Caco-2 (cell line): ENCODE measurements at regions of chr14 and their contacts with region 1.

Region 1: GRCh38 chr14:44657696-44658388 is 150.8 kb upstream of the FSCB start:
- DNase-seq: peak in 1 of 2 experiments; percentile 24
- H3K4me3 ChIP-seq: no peak overlapping the region
- H3K4me3 Mint-ChIP-seq: no peak overlapping the region
- H3K27ac Mint-ChIP-seq: no peak overlapping the region
- H3K4me1 ChIP-seq: no peaks in the 10 kb centered on the region
- H3K4me1 Mint-ChIP-seq: no peaks in the 10 kb centered on the region
- H3K27me3 ChIP-seq: no peaks in the 10 kb centered on the region
- H3K27me3 Mint-ChIP-seq: no peaks in the 10 kb centered on the region
- CTCF ChIP-seq: peak in 1 of 2 experiments; percentile 60

Region 2: DNA sequence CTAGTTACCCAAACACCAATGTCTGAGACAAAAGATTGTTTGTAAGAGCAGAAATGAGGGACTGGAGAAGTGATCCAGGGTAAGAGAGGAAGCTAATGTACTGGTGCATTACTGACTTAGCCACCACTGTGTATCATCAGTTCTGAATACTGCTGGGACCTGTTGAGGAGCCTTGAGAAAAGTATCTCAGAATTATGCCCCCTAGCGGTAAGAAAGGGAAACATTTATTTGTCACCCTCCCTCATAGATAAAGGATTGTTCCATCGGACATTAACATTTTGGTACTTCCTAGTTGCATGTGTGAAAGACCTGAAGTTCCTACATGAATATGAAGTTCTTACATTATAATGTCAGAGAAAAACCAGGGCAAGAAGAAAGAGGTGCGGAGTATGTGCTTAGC is 763.3 kb before region 1 on chr14:
- CTCF ChIA-PET with region 1: no interaction called
- POLR2A ChIA-PET with region 1: no interaction called
- intact Hi-C with region 1: loop called (anchors 5 kb)
- DNase-seq: peak in 1 of 2 experiments; percentile 30
- H3K4me3 ChIP-seq: no peak overlapping the region
- H3K4me3 Mint-ChIP-seq: no peak overlapping the region
- H3K27ac Mint-ChIP-seq: no peak overlapping the region
- H3K4me1 ChIP-seq: no peaks in the 10 kb centered on the region
- H3K4me1 Mint-ChIP-seq: no peaks in the 10 kb centered on the region
- H3K27me3 ChIP-seq: no peaks in the 10 kb centered on the region
- H3K27me3 Mint-ChIP-seq: no peaks in the 10 kb centered on the region
- CTCF ChIP-seq: peak; percentile 33 to 49

Region 3: DNA sequence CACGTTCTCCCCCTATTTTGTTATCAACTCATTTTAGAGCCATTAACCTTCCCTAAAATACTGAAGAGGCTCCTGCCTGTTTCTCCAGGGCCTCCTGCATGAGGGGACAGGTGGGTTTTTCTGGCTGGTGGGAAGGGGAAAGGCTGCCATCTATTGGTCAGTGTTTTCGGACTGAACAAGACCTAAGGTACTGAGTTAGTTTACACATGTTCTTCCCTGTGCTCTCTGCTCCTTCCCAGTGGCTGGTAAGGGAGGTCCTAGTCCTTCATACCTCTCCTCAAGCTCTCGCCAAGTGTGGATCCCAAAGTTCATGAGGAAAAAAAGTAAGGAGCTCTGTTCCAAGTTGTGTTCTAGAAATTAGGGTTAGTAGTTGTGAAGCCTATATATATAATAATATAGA is 508.2 kb before region 1 on chr14:
- CTCF ChIA-PET with region 1: no interaction called
- POLR2A ChIA-PET with region 1: no interaction called
- intact Hi-C with region 1: loop called (anchors 1 kb)
- DNase-seq: peak; percentile 63 to 64
- H3K4me3 ChIP-seq: no peak overlapping the region
- H3K4me3 Mint-ChIP-seq: no peak overlapping the region
- H3K27ac Mint-ChIP-seq: no peak overlapping the region
- H3K4me1 ChIP-seq: no peaks in the 10 kb centered on the region
- H3K4me1 Mint-ChIP-seq: no peaks in the 10 kb centered on the region
- H3K27me3 ChIP-seq: no peaks in the 10 kb centered on the region
- H3K27me3 Mint-ChIP-seq: no peaks in the 10 kb centered on the region
- CTCF ChIP-seq: peak; percentile 52 to 64

Region 4: GRCh38 chr14:44369401-44370123 is 288.3 kb before region 1 on chr14:
- CTCF ChIA-PET with region 1: no interaction called
- POLR2A ChIA-PET with region 1: no interaction called
- intact Hi-C with region 1: loop called (anchors 1 kb)
- DNase-seq: no peak
- H3K4me3 ChIP-seq: no peak overlapping the region
- H3K4me3 Mint-ChIP-seq: no peak overlapping the region
- H3K27ac Mint-ChIP-seq: no peak overlapping the region
- H3K4me1 ChIP-seq: no peaks in the 10 kb centered on the region
- H3K4me1 Mint-ChIP-seq: no peaks in the 10 kb centered on the region
- H3K27me3 ChIP-seq: no peaks in the 10 kb centered on the region
- H3K27me3 Mint-ChIP-seq: no peaks in the 10 kb centered on the region
- CTCF ChIP-seq: peak; percentile 12 to 15

Region 5: GRCh38 chr14:44412858-44413569 is 244.8 kb before region 1 on chr14:
- CTCF ChIA-PET with region 1: no interaction called
- POLR2A ChIA-PET with region 1: no interaction called
- intact Hi-C with region 1: no loop called
- DNase-seq: no peak
- H3K4me3 ChIP-seq: no peak overlapping the region
- H3K4me3 Mint-ChIP-seq: no peak overlapping the region
- H3K27ac Mint-ChIP-seq: no peak overlapping the region
- H3K4me1 ChIP-seq: peaks cover 15% of the 10 kb centered on the region
- H3K4me1 Mint-ChIP-seq: peaks cover 10% of the 10 kb centered on the region
- H3K27me3 ChIP-seq: no peaks in the 10 kb centered on the region
- H3K27me3 Mint-ChIP-seq: no peaks in the 10 kb centered on the region
- CTCF ChIP-seq: no peak

Region 6: DNA sequence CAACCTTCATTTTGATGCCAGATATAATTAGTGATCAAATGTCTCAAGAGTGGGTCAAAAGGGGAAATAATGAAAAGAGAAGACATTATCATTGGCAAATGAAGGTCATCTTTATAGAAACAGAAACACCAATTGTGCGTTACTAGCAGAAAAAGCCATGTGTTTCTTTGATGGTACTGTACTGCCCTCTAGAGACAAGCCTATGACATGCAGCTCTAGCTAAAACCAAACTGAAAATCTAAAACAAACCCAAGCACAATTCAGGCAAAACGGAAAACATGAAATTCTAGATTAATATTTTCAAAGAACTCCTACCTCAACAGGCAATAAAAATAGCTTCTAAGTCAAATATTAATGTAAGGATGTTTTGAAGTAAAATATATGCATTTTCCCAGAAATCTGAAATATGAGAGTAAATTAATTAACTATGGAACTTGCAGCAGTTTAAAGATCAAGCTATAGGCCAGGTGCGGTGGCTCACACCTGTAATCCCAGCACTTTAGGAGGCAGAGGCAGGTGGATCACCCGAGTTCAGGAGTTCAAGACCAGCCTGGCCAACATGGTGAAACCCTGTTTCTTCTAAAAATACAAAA is 188.5 kb after region 1 on chr14:
- CTCF ChIA-PET with region 1: no interaction called
- POLR2A ChIA-PET with region 1: no interaction called
- intact Hi-C with region 1: loop called (anchors 5 kb)
- DNase-seq: peak in 1 of 2 experiments; percentile 10
- H3K4me3 ChIP-seq: no peak overlapping the region
- H3K4me3 Mint-ChIP-seq: no peak overlapping the region
- H3K27ac Mint-ChIP-seq: no peak overlapping the region
- H3K4me1 ChIP-seq: no peaks in the 10 kb centered on the region
- H3K4me1 Mint-ChIP-seq: no peaks in the 10 kb centered on the region
- H3K27me3 ChIP-seq: no peaks in the 10 kb centered on the region
- H3K27me3 Mint-ChIP-seq: no peaks in the 10 kb centered on the region
- CTCF ChIP-seq: peak; percentile 32 to 62